ENCODE measurements at regions of chr3 and their contacts with region 1.

Region 1: DNA sequence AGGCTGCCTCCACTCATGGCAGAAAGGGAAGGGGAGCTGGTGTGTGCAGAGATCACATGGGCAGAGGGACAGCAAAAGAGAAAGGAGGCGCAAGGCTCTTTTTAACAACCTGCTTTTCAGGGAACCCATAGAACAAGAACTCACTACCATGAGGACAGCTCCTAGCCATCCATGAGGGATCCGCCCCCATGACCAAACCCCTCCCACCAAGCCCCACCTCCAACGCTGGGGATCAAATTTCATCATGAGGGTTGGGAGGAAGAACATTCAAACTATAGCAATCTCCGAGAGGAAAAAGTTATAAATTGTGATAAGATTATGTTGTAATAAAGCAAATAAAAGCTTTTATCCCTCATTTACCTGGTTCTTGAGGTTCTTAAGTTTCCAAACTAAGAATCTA is 84.7 kb upstream of the LMCD1 start:
- DNase-seq: peak in 1 of 2 experiments; percentile 37
- H3K4me3 ChIP-seq: no peak overlapping the region
- H3K4me3 Mint-ChIP-seq: no peak overlapping the region
- H3K27ac Mint-ChIP-seq: no peak overlapping the region
- H3K4me1 ChIP-seq: no peaks in the 10 kb centered on the region
- H3K4me1 Mint-ChIP-seq: no peaks in the 10 kb centered on the region
- H3K27me3 ChIP-seq: no peaks in the 10 kb centered on the region
- H3K27me3 Mint-ChIP-seq: peaks cover 8% of the 10 kb centered on the region
- CTCF ChIP-seq: no peak

Region 2: GRCh38 chr3:8095724-8096123 is 321.2 kb before region 1 on chr3:
- CTCF ChIA-PET with region 1: no interaction called
- POLR2A ChIA-PET with region 1: no interaction called
- intact Hi-C with region 1: loop called (anchors 1 kb)
- DNase-seq: peak; percentile 35 to 46
- H3K4me3 ChIP-seq: no peak overlapping the region
- H3K4me3 Mint-ChIP-seq: no peak overlapping the region
- H3K27ac Mint-ChIP-seq: no peak overlapping the region
- H3K4me1 ChIP-seq: no peaks in the 10 kb centered on the region
- H3K4me1 Mint-ChIP-seq: no peaks in the 10 kb centered on the region
- H3K27me3 ChIP-seq: no peaks in the 10 kb centered on the region
- H3K27me3 Mint-ChIP-seq: peaks cover 7% of the 10 kb centered on the region
- CTCF ChIP-seq: peak; percentile 16 to 21

Region 3: DNA sequence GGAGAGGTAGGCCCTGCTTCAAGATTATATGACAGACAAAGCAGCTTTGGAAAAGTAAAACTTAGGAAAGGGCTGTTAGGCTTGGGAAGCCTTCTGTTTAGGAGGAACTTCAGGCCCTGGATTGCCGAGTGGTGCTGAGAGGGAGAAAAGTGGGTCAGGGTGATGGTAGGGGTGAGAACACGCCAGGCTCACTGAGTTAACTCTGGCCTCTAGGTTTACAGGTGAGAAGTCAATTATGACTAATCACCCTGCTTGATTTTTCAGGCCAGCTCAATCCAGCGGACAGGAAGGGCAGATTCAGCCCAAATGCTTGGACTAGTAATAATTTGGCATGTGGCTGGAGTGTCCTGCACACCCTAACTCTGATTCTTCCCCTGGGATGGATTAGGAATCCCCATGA is 280.4 kb before region 1 on chr3:
- CTCF ChIA-PET with region 1: no interaction called
- POLR2A ChIA-PET with region 1: no interaction called
- intact Hi-C with region 1: no loop called
- DNase-seq: no peak
- H3K4me3 ChIP-seq: no peak overlapping the region
- H3K4me3 Mint-ChIP-seq: no peak overlapping the region
- H3K27ac Mint-ChIP-seq: no peak overlapping the region
- H3K4me1 ChIP-seq: no peaks in the 10 kb centered on the region
- H3K4me1 Mint-ChIP-seq: no peaks in the 10 kb centered on the region
- H3K27me3 ChIP-seq: no peaks in the 10 kb centered on the region; the same call in 1 of the 2 replicates
- H3K27me3 Mint-ChIP-seq: peaks cover 18% of the 10 kb centered on the region
- CTCF ChIP-seq: no peak

Region 4: GRCh38 chr3:8239718-8240695 is 177.0 kb before region 1 on chr3:
- CTCF ChIA-PET with region 1: interaction called, 16 read pairs
- POLR2A ChIA-PET with region 1: no interaction called
- intact Hi-C with region 1: no loop called
- DNase-seq: peak in 1 of 2 experiments; percentile 53
- H3K4me3 ChIP-seq: no peak overlapping the region
- H3K4me3 Mint-ChIP-seq: no peak overlapping the region
- H3K27ac Mint-ChIP-seq: no peak overlapping the region
- H3K4me1 ChIP-seq: no peaks in the 10 kb centered on the region
- H3K4me1 Mint-ChIP-seq: no peaks in the 10 kb centered on the region
- H3K27me3 ChIP-seq: no peaks in the 10 kb centered on the region
- H3K27me3 Mint-ChIP-seq: peaks cover 6% of the 10 kb centered on the region
- CTCF ChIP-seq: peak; percentile 71 to 85

Region 5: GRCh38 chr3:8278448-8278847 is 138.5 kb before region 1 on chr3:
- CTCF ChIA-PET with region 1: interaction called, 10 read pairs
- POLR2A ChIA-PET with region 1: no interaction called
- intact Hi-C with region 1: no loop called
- DNase-seq: peak in 1 of 2 experiments; percentile 3
- H3K4me3 ChIP-seq: no peak overlapping the region
- H3K4me3 Mint-ChIP-seq: no peak overlapping the region
- H3K27ac Mint-ChIP-seq: no peak overlapping the region
- H3K4me1 ChIP-seq: no peaks in the 10 kb centered on the region
- H3K4me1 Mint-ChIP-seq: no peaks in the 10 kb centered on the region
- H3K27me3 ChIP-seq: no peaks in the 10 kb centered on the region
- H3K27me3 Mint-ChIP-seq: peaks cover 6% of the 10 kb centered on the region
- CTCF ChIP-seq: no peak

Region 6: GRCh38 chr3:8324740-8325139 is 92.2 kb before region 1 on chr3:
- CTCF ChIA-PET with region 1: interaction called, 54 read pairs
- POLR2A ChIA-PET with region 1: no interaction called
- intact Hi-C with region 1: loop called (anchors 1 kb)
- DNase-seq: peak; percentile 46
- H3K4me3 ChIP-seq: no peak overlapping the region
- H3K4me3 Mint-ChIP-seq: no peak overlapping the region
- H3K27ac Mint-ChIP-seq: no peak overlapping the region
- H3K4me1 ChIP-seq: no peaks in the 10 kb centered on the region
- H3K4me1 Mint-ChIP-seq: no peaks in the 10 kb centered on the region
- H3K27me3 ChIP-seq: no peaks in the 10 kb centered on the region; the same call in 1 of the 2 replicates
- H3K27me3 Mint-ChIP-seq: peaks cover 6% of the 10 kb centered on the region
- CTCF ChIP-seq: peak; percentile 31 to 45

Region 7: GRCh38 chr3:8509961-8510360 is 93.0 kb after region 1 on chr3:
- CTCF ChIA-PET with region 1: no interaction called
- POLR2A ChIA-PET with region 1: no interaction called
- intact Hi-C with region 1: no loop called
- DNase-seq: no peak
- H3K4me3 ChIP-seq: no peak overlapping the region
- H3K4me3 Mint-ChIP-seq: no peak overlapping the region
- H3K27ac Mint-ChIP-seq: no peak overlapping the region
- H3K4me1 ChIP-seq: peaks cover 8% of the 10 kb centered on the region; the same call in 1 of the 2 replicates
- H3K4me1 Mint-ChIP-seq: peaks cover 15% of the 10 kb centered on the region
- H3K27me3 ChIP-seq: no peaks in the 10 kb centered on the region
- H3K27me3 Mint-ChIP-seq: no peaks in the 10 kb centered on the region
- CTCF ChIP-seq: no peak

Region 8: GRCh38 chr3:8607234-8608040 is 190.5 kb after region 1 on chr3:
- CTCF ChIA-PET with region 1: no interaction called
- POLR2A ChIA-PET with region 1: no interaction called
- intact Hi-C with region 1: loop called (anchors 1 kb)
- DNase-seq: peak; percentile 69 to 73
- H3K4me3 ChIP-seq: no peak overlapping the region
- H3K4me3 Mint-ChIP-seq: no peak overlapping the region
- H3K27ac Mint-ChIP-seq: no peak overlapping the region
- H3K4me1 ChIP-seq: peaks cover 12% of the 10 kb centered on the region; the same call in 1 of the 2 replicates
- H3K4me1 Mint-ChIP-seq: no peaks in the 10 kb centered on the region
- H3K27me3 ChIP-seq: no peaks in the 10 kb centered on the region
- H3K27me3 Mint-ChIP-seq: no peaks in the 10 kb centered on the region
- CTCF ChIP-seq: peak; percentile 52 to 69

Measured in Caco-2 (cell line).